ENCODE measurements at regions of chr1 and their contacts with region 1.

Region 1: GRCh38 chr1:185317034-185317885 is at the start of gene IVNS1ABP:
- DNase-seq: peak; percentile 97
- H3K4me3 ChIP-seq: peak within 1 kb of the TSS; percentile 95
- H3K27ac ChIP-seq: peak within 1 kb of the TSS; percentile 99
- H3K4me1 ChIP-seq: peaks cover 22% of the 10 kb centered on the region
- H3K27me3 ChIP-seq: no peaks in the 10 kb centered on the region
- CTCF ChIP-seq: peak; percentile 48
- total RNA-seq, gene IVNS1ABP: 221 and 263 TPM in 2 replicates

Region 2: GRCh38 chr1:184992271-184992670 is 325.0 kb before region 1 on chr1:
- CTCF ChIA-PET with region 1: no interaction called
- POLR2A ChIA-PET with region 1: no interaction called
- intact Hi-C with region 1: no loop called
- DNase-seq: no peak
- H3K4me3 ChIP-seq: no peak overlapping the region
- H3K27ac ChIP-seq: no peak overlapping the region
- H3K4me1 ChIP-seq: no peaks in the 10 kb centered on the region
- H3K27me3 ChIP-seq: no peaks in the 10 kb centered on the region
- CTCF ChIP-seq: no peak

Region 3: GRCh38 chr1:185338719-185339622 is 21.7 kb after region 1 on chr1:
- CTCF ChIA-PET with region 1: no interaction called
- POLR2A ChIA-PET with region 1: no interaction called
- intact Hi-C with region 1: loop called (anchors 2 kb)
- DNase-seq: peak; percentile 12
- H3K4me3 ChIP-seq: no peak overlapping the region
- H3K27ac ChIP-seq: no peak overlapping the region
- H3K4me1 ChIP-seq: peaks cover 4% of the 10 kb centered on the region
- H3K27me3 ChIP-seq: no peaks in the 10 kb centered on the region
- CTCF ChIP-seq: no peak

Region 4: GRCh38 chr1:185646202-185646683 is 329.0 kb after region 1 on chr1:
- CTCF ChIA-PET with region 1: interaction called, 7 read pairs
- POLR2A ChIA-PET with region 1: interaction called, 10 read pairs
- intact Hi-C with region 1: no loop called
- DNase-seq: peak; percentile 100
- H3K4me3 ChIP-seq: peak overlapping the region; percentile 30
- H3K27ac ChIP-seq: peak overlapping the region; percentile 88
- H3K4me1 ChIP-seq: peaks cover 43% of the 10 kb centered on the region
- H3K27me3 ChIP-seq: no peaks in the 10 kb centered on the region
- CTCF ChIP-seq: no peak

Region 5: DNA sequence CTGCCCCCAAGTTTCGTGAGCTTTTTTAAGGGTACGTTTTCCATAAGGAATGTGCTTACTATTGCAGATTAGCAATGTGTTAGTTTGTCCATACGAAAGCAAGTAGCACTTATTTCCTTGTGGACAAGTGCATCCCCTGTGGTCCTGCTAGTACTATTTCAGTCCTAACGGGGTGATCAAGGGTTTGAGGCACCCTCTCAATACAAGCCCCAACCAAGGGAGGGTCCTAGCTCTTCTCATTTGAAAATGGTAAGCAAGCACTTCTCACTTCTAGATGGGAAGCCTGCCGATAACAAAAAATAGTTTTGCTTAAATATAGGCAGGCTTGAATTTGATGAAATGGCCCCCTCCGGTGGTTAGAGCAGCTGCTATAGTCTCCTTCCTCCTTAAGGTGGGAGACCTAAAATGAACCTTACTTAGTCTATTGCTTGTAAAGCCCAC is 352.9 kb after region 1 on chr1:
- CTCF ChIA-PET with region 1: interaction called, 5 read pairs
- POLR2A ChIA-PET with region 1: no interaction called
- intact Hi-C with region 1: loop called (anchors 2 kb)
- DNase-seq: peak; percentile 84
- H3K4me3 ChIP-seq: no peak overlapping the region
- H3K27ac ChIP-seq: peak overlapping the region; percentile 1
- H3K4me1 ChIP-seq: peaks cover 55% of the 10 kb centered on the region
- H3K27me3 ChIP-seq: no peaks in the 10 kb centered on the region
- CTCF ChIP-seq: peak; percentile 78

Region 6: GRCh38 chr1:185699874-185700273 is 382.6 kb after region 1 on chr1:
- CTCF ChIA-PET with region 1: no interaction called
- POLR2A ChIA-PET with region 1: no interaction called
- intact Hi-C with region 1: no loop called
- DNase-seq: no peak
- H3K4me3 ChIP-seq: no peak overlapping the region
- H3K27ac ChIP-seq: no peak overlapping the region
- H3K4me1 ChIP-seq: peaks cover 46% of the 10 kb centered on the region
- H3K27me3 ChIP-seq: no peaks in the 10 kb centered on the region
- CTCF ChIP-seq: no peak

Measured in A673 (cell line).